GM13976 (cell line): ENCODE measurements at regions of chrX and their contacts with region 1.

Region 1: GRCh38 chrX:85590638-85591037 is 211.2 kb upstream of the POF1B start:
- DNase-seq: no peak
- CTCF ChIP-seq: no peak

Region 2: DNA sequence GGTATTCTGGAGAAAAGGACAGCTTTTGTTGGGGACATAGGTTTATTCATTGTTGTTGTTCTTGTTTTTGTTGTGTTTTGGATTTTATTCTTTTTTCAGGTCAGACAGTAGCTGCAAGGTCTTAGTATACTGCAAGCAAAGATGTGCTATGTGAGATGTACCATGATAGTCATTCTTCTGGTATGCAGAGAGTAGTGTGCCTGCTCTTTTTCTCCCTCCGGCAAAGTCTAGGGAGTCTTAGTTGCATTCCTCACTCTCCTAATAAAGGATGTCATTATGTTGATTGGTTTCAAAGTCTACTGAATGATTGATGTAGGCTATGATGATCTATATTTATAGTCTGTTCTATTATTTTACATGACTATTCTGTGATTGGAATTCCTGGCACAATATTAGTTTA is 91.2 kb before region 1 on chrX:
- in situ Hi-C with region 1: loop called (anchors 25 kb)
- DNase-seq: no peak
- CTCF ChIP-seq: no peak

Region 3: GRCh38 chrX:85859426-85859825 is 268.8 kb after region 1 on chrX:
- in situ Hi-C with region 1: no loop called
- DNase-seq: no peak
- CTCF ChIP-seq: no peak